ENCODE measurements at regions of chr17 and their contacts with region 1.

Region 1: GRCh38 chr17:60729854-60730253 is 52.2 kb downstream of the BCAS3 start:
- DNase-seq: no peak
- ATAC-seq: no peak
- H3K4me3 ChIP-seq: no peak overlapping the region
- H3K4me3 Mint-ChIP-seq: no peak overlapping the region
- H3K27ac ChIP-seq: no peak overlapping the region
- H3K27ac Mint-ChIP-seq: no peak overlapping the region
- H3K4me1 ChIP-seq: no peaks in the 10 kb centered on the region
- H3K4me1 Mint-ChIP-seq: peaks cover 7 to 17% (median 15%) of the 10 kb centered on the region in 3 donors
- H3K27me3 ChIP-seq: no peaks in the 10 kb centered on the region
- H3K27me3 Mint-ChIP-seq: no peaks in the 10 kb centered on the region

Region 2: GRCh38 chr17:60333628-60334031 is 396.2 kb before region 1 on chr17:
- CTCF ChIA-PET with region 1: no interaction called
- POLR2A ChIA-PET with region 1: no interaction called
- DNase-seq: no peak
- ATAC-seq: no peak
- H3K4me3 ChIP-seq: no peak overlapping the region
- H3K4me3 Mint-ChIP-seq: no peak overlapping the region
- H3K27ac ChIP-seq: no peak overlapping the region
- H3K27ac Mint-ChIP-seq: no peak overlapping the region
- H3K4me1 ChIP-seq: no peaks in the 10 kb centered on the region
- H3K4me1 Mint-ChIP-seq: peaks cover 6 to 26% (median 8%) of the 10 kb centered on the region in 3 donors
- H3K27me3 ChIP-seq: no peaks in the 10 kb centered on the region
- H3K27me3 Mint-ChIP-seq: no peaks in the 10 kb centered on the region

Region 3: GRCh38 chr17:60743799-60744198 is 13.9 kb after region 1 on chr17:
- CTCF ChIA-PET with region 1: interaction called in 1 of 2 experiments, 3 read pairs
- POLR2A ChIA-PET with region 1: interaction called in 1 of 2 experiments, 12 read pairs
- DNase-seq: no peak
- ATAC-seq: no peak
- H3K4me3 ChIP-seq: no peak overlapping the region
- H3K4me3 Mint-ChIP-seq: no peak overlapping the region
- H3K27ac ChIP-seq: no peak overlapping the region
- H3K27ac Mint-ChIP-seq: no peak overlapping the region
- H3K4me1 ChIP-seq: no peaks in the 10 kb centered on the region
- H3K4me1 Mint-ChIP-seq: peaks cover 0 to 5% (median 3%) of the 10 kb centered on the region in 3 donors
- H3K27me3 ChIP-seq: no peaks in the 10 kb centered on the region
- H3K27me3 Mint-ChIP-seq: no peaks in the 10 kb centered on the region

Measured in T-cell (primary cell).